Transverse colon (tissue), 4 donors: ENCODE measurements at regions of chr9 and their contacts with region 1.

Region 1: GRCh38 chr9:27701587-27701986 is 128.3 kb upstream of the C9orf72 start:
- DNase-seq: peak; percentile 18
- H3K4me3 ChIP-seq: no peak overlapping the region
- H3K27ac ChIP-seq: peak overlapping the region in 2 of 4 donors; percentile 21 to 35
- H3K4me1 ChIP-seq: peaks cover 0 to 6% (median 0%) of the 10 kb centered on the region in 4 donors
- H3K27me3 ChIP-seq: no peaks in the 10 kb centered on the region
- CTCF ChIP-seq: no peak
- EP300 ChIP-seq: no peak
- POLR2A ChIP-seq: no peak

Region 2: GRCh38 chr9:26561928-26562327 is 1139.7 kb before region 1 on chr9:
- in situ Hi-C with region 1: no loop called
- intact Hi-C with region 1: no loop called
- DNase-seq: no peak
- H3K4me3 ChIP-seq: no peak overlapping the region
- H3K27ac ChIP-seq: no peak overlapping the region
- H3K4me1 ChIP-seq: peaks cover 0 to 2% (median 0%) of the 10 kb centered on the region in 4 donors
- H3K27me3 ChIP-seq: no peaks in the 10 kb centered on the region
- CTCF ChIP-seq: no peak
- EP300 ChIP-seq: no peak
- POLR2A ChIP-seq: no peak

Region 3: DNA sequence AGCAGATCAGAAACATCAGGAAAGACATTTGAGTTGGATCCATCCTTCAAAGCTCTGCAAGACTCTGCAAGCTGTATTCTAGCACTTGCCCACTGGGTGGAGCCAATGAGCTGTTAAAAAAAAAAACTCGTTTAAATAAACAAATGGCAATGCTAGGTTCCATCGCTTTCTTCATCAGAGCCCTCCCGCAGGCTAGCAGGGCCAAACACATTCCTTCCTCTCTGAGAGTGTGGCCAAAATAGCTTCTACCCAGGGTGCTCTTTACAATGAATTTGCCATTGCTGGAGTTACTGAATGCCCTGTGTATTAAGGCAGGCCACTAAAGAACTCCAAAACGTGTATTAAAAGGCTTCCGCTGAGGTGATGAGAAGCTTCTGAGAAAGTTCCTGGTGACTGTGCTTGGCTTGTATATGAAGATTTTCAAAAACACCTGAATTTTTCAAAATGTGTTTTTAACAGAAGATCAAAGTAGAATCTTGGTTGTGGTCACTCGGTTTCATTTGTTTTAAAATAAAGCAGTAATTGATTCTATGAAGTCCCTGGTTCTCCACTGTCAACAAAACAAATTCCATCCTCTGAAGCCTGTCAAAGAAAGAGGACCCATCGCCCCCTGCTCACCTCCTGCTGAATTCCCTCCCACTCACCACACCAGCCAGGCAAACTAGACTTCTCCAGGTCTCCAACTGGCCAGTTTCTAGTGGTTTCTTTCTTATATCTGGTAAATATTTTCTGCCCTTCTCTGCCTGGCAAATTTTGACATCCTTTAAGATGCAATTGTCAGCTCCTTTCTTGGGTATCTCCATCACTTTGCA is 368.1 kb before region 1 on chr9:
- in situ Hi-C with region 1: no loop called
- intact Hi-C with region 1: no loop called
- DNase-seq: peak; percentile 61
- H3K4me3 ChIP-seq: no peak overlapping the region
- H3K27ac ChIP-seq: no peak overlapping the region
- H3K4me1 ChIP-seq: peaks cover 6 to 34% (median 18%) of the 10 kb centered on the region in 4 donors
- H3K27me3 ChIP-seq: no peaks in the 10 kb centered on the region
- CTCF ChIP-seq: peak; percentile 85 to 95 (median 87)
- EP300 ChIP-seq: no peak
- POLR2A ChIP-seq: no peak

Region 4: DNA sequence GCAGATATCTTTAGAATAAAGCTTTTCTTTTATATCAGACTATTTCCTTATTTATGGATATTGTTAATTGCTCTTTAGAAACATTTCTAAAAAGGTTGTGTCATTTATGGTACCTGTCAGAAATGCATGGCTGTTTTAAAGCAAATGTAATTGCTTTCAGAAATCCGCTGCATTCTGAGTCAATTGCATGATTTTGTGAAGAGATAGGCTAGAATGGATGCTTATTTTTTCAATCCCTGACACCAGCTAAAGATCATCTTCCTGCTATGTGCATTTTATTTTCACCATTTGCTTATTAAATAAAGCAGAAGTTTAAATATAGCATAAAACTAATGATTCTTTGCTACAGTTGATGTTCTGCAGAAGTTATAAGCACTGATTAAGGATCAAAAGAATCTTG is 41.9 kb after region 1 on chr9:
- in situ Hi-C with region 1: no loop called
- intact Hi-C with region 1: loop called (anchors 2 kb)
- DNase-seq: no peak
- H3K4me3 ChIP-seq: no peak overlapping the region
- H3K27ac ChIP-seq: no peak overlapping the region
- H3K4me1 ChIP-seq: no peaks in the 10 kb centered on the region
- H3K27me3 ChIP-seq: no peaks in the 10 kb centered on the region
- CTCF ChIP-seq: no peak
- EP300 ChIP-seq: no peak
- POLR2A ChIP-seq: no peak